GM10248 (cell line): ENCODE measurements at regions of chr11 and their contacts with region 1.

Region 1: GRCh38 chr11:3091791-3092602 is 34.8 kb upstream of the CARS1 start:
- DNase-seq: peak; percentile 93
- CTCF ChIP-seq: peak; percentile 95

Region 2: DNA sequence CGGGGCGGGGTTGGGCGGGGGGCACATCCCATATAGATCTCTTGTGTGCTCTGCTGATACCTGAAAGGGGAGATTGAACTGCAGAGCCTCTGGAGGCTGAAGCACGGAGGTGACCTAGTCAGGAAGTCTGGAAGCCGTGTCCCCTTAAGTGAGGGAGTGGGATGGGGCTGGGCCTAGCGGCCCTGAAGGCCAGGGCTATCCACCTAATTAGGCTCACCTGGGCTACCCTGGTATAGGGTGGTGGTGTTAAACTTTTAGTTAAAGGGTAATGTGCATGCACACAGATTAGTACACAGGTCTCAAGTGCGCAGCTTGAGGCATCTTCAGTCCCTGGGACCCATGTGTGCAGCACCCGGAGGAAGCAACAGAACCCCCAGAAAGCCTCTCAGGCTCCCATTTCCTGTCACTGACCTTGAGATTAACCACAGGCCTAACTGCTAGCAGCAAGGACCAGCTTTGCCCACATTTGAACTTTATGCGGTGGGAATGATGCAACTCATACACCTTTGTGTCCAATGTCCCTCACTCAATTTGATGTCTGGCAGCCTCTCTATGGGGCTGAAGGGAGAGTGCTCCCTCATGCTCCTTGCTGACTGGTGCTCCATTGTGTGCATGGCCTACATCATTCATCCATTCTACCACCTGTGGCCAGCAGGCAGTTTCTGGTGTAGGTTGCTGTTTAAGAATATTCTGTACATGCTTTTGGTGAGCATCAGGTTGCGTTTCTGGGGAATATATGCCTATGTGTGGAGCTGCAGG is 424.2 kb before region 1 on chr11:
- CTCF ChIA-PET with region 1: no interaction called
- POLR2A ChIA-PET with region 1: no interaction called
- DNase-seq: no peak
- CTCF ChIP-seq: no peak

Region 3: DNA sequence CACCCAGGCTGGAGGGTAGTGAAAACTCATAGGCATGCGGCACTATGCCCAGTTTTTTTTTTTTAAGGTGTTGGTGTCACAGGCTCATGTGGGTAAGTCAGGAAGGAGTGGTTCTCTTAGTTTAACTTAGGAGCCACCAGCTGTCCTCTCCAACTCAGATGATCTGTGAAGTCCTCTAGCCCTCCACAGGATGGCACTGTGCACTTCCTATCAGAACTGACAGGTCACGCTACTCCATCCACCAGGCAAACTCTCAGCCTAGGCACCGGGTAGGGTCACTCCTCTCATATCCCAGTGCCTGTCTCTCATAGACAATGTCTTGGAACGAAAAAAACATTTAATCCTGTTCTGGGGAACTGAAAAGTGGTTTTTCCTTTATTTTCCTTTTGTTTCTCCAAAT is 116.4 kb before region 1 on chr11:
- CTCF ChIA-PET with region 1: interaction called, 22 read pairs
- POLR2A ChIA-PET with region 1: no interaction called
- DNase-seq: peak; percentile 39
- CTCF ChIP-seq: peak; percentile 57

Region 4: GRCh38 chr11:3037040-3037944 is 54.7 kb before region 1 on chr11:
- CTCF ChIA-PET with region 1: interaction called, 115 read pairs
- POLR2A ChIA-PET with region 1: no interaction called
- DNase-seq: peak; percentile 59
- CTCF ChIP-seq: peak; percentile 64

Region 5: GRCh38 chr11:3049430-3050243 is 42.4 kb before region 1 on chr11:
- CTCF ChIA-PET with region 1: interaction called, 54 read pairs
- POLR2A ChIA-PET with region 1: interaction called, 3 read pairs
- DNase-seq: peak; percentile 86
- CTCF ChIP-seq: peak; percentile 8

Region 6: DNA sequence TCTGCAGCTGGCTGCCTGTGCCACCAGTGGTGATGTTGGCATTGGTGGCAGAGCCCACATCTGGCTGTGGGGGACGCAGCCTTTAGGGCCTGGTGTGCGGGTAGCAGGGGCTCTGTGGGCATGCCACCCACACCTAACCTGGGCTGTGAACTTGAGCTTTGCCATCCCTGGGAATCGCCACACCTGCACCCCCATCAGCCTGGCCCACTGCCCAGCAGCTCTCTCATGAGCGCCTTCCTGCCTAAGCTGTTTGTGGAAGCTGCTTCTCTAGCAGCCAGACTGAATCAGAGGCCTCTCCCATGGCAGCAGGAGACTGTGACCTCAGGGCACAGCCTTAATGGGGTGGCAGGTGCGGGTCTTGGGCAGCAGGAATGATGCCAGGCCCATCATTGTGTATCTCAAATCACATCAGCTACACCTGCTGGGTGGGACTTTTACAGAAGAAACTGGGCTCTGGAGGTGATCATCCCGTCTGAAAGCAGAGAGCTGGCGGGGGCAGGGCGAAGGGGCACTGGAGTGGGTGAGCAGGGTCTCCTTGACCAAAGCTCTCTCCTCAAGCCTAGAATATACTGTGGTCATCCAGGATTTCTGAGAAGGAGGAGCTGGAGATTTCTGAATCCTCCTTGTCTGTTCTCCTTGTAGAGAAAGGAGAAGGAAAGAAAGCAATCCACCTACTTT is 16.9 kb before region 1 on chr11:
- CTCF ChIA-PET with region 1: interaction called, 16 read pairs
- POLR2A ChIA-PET with region 1: no interaction called
- DNase-seq: no peak
- CTCF ChIP-seq: no peak